ENCODE measurements at regions of chrX and their contacts with region 1.

Region 1: GRCh38 chrX:132292793-132293192 is 73.5 kb upstream of the RAP2C start:
- DNase-seq: peak; percentile 15
- H3K4me3 ChIP-seq: no peak overlapping the region
- H3K27ac ChIP-seq: no peak overlapping the region
- H3K27me3 ChIP-seq: no peaks in the 10 kb centered on the region
- CTCF ChIP-seq: peak; percentile 51

Region 2: DNA sequence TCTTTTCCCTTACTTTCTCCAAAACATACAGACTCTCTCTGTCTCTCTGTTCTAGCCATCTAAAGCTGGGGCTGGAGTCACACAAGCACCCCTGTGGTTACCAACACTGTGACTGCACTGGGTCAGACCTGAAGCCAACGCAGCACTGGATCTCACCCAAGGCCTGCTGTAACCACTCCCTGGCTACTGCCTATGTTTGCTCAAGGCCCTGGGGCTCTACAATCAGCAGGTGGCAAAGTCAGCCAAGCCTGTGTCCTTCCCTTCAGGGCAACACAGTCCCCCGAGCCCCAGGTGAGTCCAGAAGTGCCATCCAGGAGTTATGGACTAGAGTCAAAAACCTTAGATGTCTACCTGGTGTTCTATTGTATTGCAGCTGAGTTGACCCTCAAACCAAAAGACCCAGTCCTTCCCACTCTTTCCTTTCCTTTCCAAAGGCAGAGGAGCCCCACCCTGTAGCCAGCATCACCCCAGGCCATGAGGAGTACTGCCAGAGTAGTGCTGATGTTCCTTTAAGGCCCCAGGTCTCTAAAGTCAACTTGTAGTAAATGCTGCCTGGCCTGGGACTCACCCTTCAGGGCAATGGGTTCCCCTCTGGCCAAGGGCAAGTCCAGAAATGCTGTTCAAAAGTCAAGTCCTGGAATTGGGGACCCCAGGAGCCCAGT is 14.7 kb before region 1 on chrX:
- CTCF ChIA-PET with region 1: interaction called, 20 read pairs
- POLR2A ChIA-PET with region 1: no interaction called
- DNase-seq: no peak
- H3K4me3 ChIP-seq: no peak overlapping the region
- H3K27ac ChIP-seq: no peak overlapping the region
- H3K27me3 ChIP-seq: no peaks in the 10 kb centered on the region
- CTCF ChIP-seq: no peak

Region 3: GRCh38 chrX:132592880-132593279 is 300.1 kb after region 1 on chrX:
- CTCF ChIA-PET with region 1: interaction called, 10 read pairs
- POLR2A ChIA-PET with region 1: no interaction called
- DNase-seq: no peak
- H3K4me3 ChIP-seq: no peak overlapping the region
- H3K27ac ChIP-seq: no peak overlapping the region
- H3K27me3 ChIP-seq: no peaks in the 10 kb centered on the region
- CTCF ChIP-seq: no peak; the same call in 1 of the 2 replicates

Region 4: GRCh38 chrX:132615391-132616131 is 322.8 kb after region 1 on chrX:
- CTCF ChIA-PET with region 1: interaction called, 40 read pairs
- POLR2A ChIA-PET with region 1: no interaction called
- DNase-seq: no peak
- H3K4me3 ChIP-seq: no peak overlapping the region
- H3K27ac ChIP-seq: no peak overlapping the region
- H3K27me3 ChIP-seq: no peaks in the 10 kb centered on the region
- CTCF ChIP-seq: peak; percentile 33

Region 5: DNA sequence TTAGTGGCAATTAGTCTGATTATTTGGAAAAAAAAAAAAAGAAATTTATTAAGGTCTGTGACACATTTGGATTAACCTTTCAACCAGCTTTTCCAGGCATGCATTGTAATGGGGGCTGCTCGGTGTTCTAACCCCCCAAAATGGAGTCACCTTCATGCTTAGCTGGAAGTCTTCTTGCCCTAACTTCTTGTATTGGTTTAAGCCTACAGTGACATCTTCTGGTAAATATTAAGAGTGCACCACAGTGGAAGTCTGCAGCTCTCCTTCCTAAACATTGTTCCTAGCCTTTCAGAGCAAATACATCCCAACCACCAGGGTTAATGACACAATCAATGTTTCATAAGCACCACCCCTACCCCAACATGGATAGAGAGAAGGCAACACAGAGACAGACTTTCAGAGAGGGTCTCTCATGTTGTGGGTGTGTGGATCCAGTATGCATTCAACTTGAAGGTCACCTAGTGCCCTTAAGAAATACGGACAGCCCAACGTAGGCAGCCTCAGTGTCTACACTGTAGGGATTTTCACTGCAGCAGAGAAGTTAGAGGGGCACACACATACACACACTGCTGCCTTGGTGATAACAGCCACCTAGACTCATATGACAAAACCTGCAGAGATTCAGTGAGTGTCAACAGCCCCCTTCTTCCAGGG is 338.9 kb after region 1 on chrX:
- CTCF ChIA-PET with region 1: interaction called, 13 read pairs
- POLR2A ChIA-PET with region 1: no interaction called
- DNase-seq: no peak
- H3K4me3 ChIP-seq: no peak overlapping the region
- H3K27ac ChIP-seq: no peak overlapping the region
- H3K27me3 ChIP-seq: no peaks in the 10 kb centered on the region
- CTCF ChIP-seq: peak; percentile 51

Region 6: GRCh38 chrX:132740316-132741123 is 447.7 kb after region 1 on chrX:
- CTCF ChIA-PET with region 1: no interaction called
- POLR2A ChIA-PET with region 1: no interaction called
- DNase-seq: no peak
- H3K4me3 ChIP-seq: no peak overlapping the region
- H3K27ac ChIP-seq: no peak overlapping the region
- H3K27me3 ChIP-seq: no peaks in the 10 kb centered on the region
- CTCF ChIP-seq: peak; percentile 35